Heart right ventricle (tissue), 16 donors: ENCODE measurements at regions of chr2 and their contacts with region 1.

Region 1: DNA sequence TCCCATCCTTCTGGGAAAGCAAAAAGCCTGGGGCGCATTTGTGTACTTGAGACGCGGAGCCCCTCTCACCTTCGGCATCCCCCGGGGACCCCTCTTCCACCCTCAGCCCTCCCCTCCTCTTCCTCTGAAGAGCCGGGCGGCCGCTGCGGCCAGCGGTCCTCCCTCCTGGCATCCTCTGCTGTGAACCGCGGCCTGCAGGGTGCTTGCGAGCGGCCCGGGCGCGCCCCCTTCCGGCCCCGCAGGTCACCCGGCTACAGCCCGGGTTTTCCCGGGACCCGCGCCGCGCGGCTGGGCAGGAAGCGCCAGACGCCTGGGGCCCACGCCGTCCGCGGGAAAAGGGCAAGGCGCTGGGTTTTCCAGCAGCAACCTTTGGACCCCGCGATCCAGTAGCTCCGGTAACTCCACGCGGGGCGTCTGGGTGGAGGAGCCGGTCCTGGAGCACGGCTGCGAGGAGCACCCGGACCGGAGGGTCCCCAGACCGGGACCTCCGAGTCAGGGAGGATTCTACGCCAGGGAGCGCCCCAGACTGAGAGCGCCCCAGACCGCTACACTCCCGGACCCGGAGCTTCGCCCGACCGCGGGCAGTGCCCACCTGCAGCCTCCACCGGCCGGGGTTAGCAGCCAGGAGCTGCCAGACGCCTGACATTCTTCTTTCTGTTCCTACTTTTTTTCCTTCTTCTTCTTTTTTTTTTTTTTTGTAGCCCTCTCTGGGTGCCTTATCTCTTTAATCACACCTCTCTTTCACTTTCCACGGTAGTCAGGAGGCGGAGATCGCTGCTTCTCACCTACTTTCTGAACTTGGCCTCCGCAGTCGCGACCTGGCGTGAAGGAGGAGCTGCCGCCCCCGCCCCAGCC is at the start of gene IL18R1:
- DNase-seq: peak; percentile 68 to 85
- ATAC-seq: peak; percentile 98 to 99 (median 99)
- H3K4me3 ChIP-seq: peak within 1 kb of the TSS; percentile 41 to 88 (median 79)
- H3K27ac ChIP-seq: peak within 1 kb of the TSS in 9 of 10 donors; percentile 53 to 93 (median 74)
- H3K4me1 ChIP-seq: peaks cover 0 to 40% (median 5%) of the 10 kb centered on the region in 9 donors
- H3K27me3 ChIP-seq: peaks cover 0 to 7% (median 0%) of the 10 kb centered on the region in 7 donors
- CTCF ChIP-seq: peak; percentile 62 to 95 (median 86)
- total RNA-seq, gene IL18R1: 0.06 to 4.9 (median 1.1) TPM

Region 2: DNA sequence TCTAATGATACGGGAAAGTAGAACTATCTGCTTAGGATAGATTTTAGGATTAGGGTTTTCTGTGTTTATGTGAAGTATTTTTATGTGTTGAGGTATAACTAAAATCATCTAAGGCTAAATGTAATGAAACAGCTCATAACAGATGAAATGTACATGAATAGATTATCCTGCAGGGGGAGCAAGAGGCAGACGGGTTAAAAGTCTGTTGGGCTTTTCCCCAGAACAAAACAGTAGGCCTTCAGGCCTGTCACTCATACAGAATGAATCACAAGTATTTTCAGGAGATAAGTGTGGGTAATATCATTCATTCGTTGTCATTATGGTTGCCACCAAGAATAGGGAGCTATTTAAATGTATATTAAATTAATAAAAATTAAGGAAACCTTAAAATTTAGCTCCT is 471.9 kb before region 1 on chr2:
- intact Hi-C with region 1: loop called in 1 of 10 experiments (anchors 10 kb)
- DNase-seq: no peak
- ATAC-seq: peak; percentile 29 to 82 (median 62)
- H3K4me3 ChIP-seq: no peak overlapping the region
- H3K27ac ChIP-seq: peak overlapping the region in 1 of 10 donors; percentile 27
- H3K4me1 ChIP-seq: peaks cover 0 to 42% (median 30%) of the 10 kb centered on the region in 9 donors
- H3K27me3 ChIP-seq: no peaks in the 10 kb centered on the region
- CTCF ChIP-seq: peak; percentile 24 to 68 (median 57)

Region 3: DNA sequence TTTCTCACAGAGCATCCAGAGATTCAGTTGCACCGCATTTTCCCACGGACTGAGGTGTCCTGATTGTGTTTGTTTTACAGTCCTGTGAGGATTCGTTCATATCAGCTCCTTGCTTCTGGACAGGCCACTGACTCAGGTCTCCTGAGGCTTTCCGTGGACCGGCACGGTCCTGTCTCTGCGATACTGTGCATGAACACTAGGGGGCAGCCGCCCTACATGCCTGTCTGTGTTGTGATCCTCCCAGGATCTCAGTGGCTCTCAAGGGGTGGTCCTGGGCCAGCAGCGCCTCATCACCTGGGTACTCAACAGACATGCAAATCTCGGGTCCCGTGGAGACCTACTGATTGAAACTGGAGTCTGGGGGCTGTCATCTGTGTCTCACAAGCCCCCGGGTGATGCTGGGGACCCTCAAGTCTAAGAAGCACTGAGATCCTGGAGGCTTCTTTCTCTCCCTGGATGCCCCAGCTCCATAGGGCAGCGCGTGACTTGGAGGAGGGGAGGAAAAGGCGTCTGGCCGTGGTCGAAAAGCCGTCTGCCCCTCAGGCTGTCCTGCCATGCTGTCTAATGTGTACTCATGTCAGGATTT is 335.1 kb before region 1 on chr2:
- intact Hi-C with region 1: loop called in 5 of 10 experiments (anchors 10 kb)
- DNase-seq: peak; percentile 89 to 92
- ATAC-seq: peak; percentile 91 to 97 (median 95)
- H3K4me3 ChIP-seq: no peak overlapping the region
- H3K27ac ChIP-seq: peak overlapping the region in 4 of 10 donors; percentile 53 to 79 (median 62)
- H3K4me1 ChIP-seq: peaks cover 0 to 42% (median 20%) of the 10 kb centered on the region in 9 donors
- H3K27me3 ChIP-seq: no peaks in the 10 kb centered on the region
- CTCF ChIP-seq: peak; percentile 98 to 100 (median 99)

Region 4: DNA sequence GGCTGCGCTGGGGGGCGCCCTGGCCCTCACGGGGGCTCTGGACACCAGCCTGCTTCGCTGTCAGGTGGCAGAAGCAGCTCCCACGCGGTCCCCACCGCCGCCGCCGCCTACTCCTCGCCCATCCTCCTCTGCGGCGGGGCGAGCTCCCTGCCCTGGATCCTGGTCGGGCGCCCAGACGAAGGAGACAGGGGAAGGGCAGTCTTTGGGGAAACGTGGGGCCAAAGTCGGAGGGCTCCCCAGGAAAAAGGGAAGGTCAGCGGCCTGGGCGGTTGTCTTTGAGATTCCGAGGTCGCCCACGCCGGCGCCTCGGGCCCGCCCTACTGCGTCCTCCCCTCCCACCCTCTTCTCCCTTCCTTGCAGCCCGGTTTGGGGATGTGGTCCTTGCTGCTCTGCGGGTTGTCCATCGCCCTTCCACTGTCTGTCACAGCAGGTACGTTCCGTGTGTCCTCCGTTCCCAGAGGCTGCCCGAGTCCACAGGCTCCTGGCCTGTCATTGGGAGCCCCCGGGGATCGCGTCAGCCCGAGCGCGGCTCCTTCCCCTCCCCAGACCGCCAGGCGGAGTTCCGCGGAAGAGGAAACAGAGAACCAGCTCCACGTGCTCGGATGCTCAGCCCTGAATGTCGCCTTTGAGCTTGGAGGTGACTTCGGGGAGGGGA is 168.1 kb before region 1 on chr2:
- intact Hi-C with region 1: no loop called
- DNase-seq: peak; percentile 62 to 65
- ATAC-seq: peak; percentile 80 to 93 (median 88)
- H3K4me3 ChIP-seq: peak overlapping the region; percentile 13 to 63 (median 53)
- H3K27ac ChIP-seq: peak overlapping the region in 7 of 10 donors; percentile 44 to 80 (median 68)
- H3K4me1 ChIP-seq: peaks cover 2 to 29% (median 8%) of the 10 kb centered on the region in 9 donors
- H3K27me3 ChIP-seq: peaks cover 0 to 28% (median 3%) of the 10 kb centered on the region in 7 donors
- CTCF ChIP-seq: peak in 7 of 9 donors; percentile 20 to 55 (median 38)

Region 5: GRCh38 chr2:102240640-102241370 is 114.9 kb before region 1 on chr2:
- intact Hi-C with region 1: loop called in 1 of 10 experiments (anchors 5 kb)
- DNase-seq: peak; percentile 93
- ATAC-seq: peak; percentile 93 to 97 (median 94)
- H3K4me3 ChIP-seq: peak overlapping the region in 5 of 10 donors; percentile 15 to 35 (median 19)
- H3K27ac ChIP-seq: peak overlapping the region; percentile 59 to 91 (median 78)
- H3K4me1 ChIP-seq: peaks cover 0 to 41% (median 20%) of the 10 kb centered on the region in 9 donors
- H3K27me3 ChIP-seq: peaks cover 0 to 17% (median 0%) of the 10 kb centered on the region in 7 donors
- CTCF ChIP-seq: peak; percentile 96 to 100 (median 99)

Region 6: GRCh38 chr2:102258386-102259074 is 97.2 kb before region 1 on chr2:
- intact Hi-C with region 1: loop called in 4 of 10 experiments (anchors 2 to 10 kb)
- DNase-seq: no peak
- ATAC-seq: peak in 1 of 8 donors; percentile 77
- H3K4me3 ChIP-seq: no peak overlapping the region
- H3K27ac ChIP-seq: peak overlapping the region in 1 of 10 donors; percentile 45
- H3K4me1 ChIP-seq: peaks cover 0 to 37% (median 0%) of the 10 kb centered on the region in 9 donors
- H3K27me3 ChIP-seq: peaks cover 0 to 13% (median under 1%) of the 10 kb centered on the region in 7 donors
- CTCF ChIP-seq: no peak

Region 7: DNA sequence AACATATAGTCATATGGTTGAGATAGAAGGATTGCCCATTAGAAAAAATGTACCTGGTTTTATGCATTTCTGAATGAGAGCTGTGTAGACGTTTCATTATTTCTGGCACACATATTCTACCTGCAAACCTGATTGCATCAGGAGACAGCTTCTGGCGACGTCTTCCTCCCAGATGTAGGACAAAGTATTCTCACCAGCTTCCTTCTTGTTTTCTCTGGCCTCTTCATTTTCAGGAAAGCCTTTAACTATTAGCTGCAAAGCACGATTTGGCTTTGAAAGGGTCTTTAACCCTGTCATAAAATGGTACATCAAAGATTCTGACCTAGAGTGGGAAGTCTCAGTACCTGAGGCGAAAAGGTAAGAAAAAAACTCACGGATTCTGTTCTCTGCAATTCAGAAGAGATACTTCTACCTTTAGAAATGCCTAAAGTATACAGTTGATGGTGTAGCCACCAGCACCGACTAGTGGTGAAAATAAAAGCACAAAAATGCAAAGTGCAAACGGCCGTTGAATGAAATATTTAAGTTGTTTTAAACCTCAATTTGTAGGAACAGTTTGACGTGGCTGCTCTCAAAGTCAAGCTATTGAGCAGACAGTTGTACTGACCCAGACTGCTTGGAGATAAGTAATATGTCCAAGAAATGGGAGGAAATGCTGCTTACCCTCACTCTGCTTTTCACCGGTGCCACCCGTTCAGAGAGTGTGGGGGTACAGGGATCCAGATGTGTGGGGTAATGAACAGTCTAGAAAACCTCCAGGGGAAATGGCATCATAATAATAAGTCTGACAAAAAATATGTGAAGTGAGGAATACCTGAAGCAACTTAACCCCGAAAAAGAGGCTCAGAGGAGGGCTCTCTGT is 87.4 kb after region 1 on chr2:
- intact Hi-C with region 1: loop called in 6 of 10 experiments (anchors 5 to 10 kb)
- DNase-seq: no peak
- ATAC-seq: peak in 3 of 8 donors; percentile 22 to 72 (median 52)
- H3K4me3 ChIP-seq: no peak overlapping the region
- H3K27ac ChIP-seq: no peak overlapping the region
- H3K4me1 ChIP-seq: peaks cover 0 to 16% (median 0%) of the 10 kb centered on the region in 9 donors
- H3K27me3 ChIP-seq: peaks cover 0 to 3% (median 0%) of the 10 kb centered on the region in 7 donors
- CTCF ChIP-seq: peak; percentile 39 to 80 (median 68)